HepG2 (cell line): ENCODE measurements at regions of chr6 and their contacts with region 1.

Region 1: DNA sequence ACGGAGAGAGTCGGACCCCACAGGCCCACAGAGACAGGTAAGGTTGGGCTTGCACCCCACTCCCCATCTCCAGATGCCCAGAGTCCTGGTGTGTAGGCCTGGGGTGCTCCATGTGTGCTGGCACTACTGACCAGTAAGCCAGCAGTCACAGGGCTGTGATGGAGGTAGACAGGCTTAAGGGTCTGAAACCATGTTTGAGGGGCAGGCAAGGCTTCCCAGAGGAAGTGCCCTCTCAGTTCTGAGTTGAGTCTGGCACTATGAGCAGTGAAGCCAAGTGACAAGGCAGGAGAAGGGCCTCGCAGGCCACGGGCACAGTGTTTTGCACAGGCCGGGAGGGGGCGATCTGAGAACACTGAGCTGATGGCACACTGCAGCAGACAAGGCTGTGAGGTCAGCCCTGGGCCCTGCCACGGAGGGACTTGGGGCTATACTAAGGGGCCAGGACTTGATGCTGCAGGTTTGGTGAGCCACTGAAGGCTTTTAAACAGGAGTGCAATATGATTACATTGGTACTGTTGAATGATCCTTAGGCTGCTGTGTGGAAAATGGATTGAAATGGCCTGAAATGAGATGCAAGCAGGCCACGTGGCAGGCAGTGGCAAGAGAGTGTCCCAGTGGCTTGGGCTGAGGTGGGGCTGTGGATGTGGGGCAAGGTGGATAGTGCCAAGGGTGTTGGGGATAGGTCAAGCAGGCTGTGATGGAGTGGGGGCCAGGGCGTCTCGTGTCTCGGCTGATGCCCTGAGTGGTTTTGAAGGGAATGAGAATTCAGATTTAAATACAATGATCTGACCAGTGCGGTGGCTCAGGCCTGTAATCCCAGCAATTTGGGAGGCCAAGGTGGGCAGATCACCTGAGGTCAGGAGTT is 20.3 kb downstream of the TTBK1 start:
- DNase-seq: peak; percentile 78
- ATAC-seq: peak; percentile 73
- H3K4me3 ChIP-seq: no peak overlapping the region; a peak in 1 of 6 replicates
- H3K27ac ChIP-seq: no peak overlapping the region
- H3K4me1 ChIP-seq: peaks cover 78% of the 10 kb centered on the region
- H3K27me3 ChIP-seq: peaks cover 0 to 4% of the 10 kb centered on the region in 2 experiments; a peak in 2 of 5 replicates
- CTCF ChIP-seq: peak; percentile 100
- EP300 ChIP-seq: 0 out of 4 replicates have a peak, but pooled peaks of 1 of the 2 experiments have one; percentile 12
- POLR2A ChIP-seq: no peak
- RAD21 ChIP-seq: peak; percentile 100

Region 2: DNA sequence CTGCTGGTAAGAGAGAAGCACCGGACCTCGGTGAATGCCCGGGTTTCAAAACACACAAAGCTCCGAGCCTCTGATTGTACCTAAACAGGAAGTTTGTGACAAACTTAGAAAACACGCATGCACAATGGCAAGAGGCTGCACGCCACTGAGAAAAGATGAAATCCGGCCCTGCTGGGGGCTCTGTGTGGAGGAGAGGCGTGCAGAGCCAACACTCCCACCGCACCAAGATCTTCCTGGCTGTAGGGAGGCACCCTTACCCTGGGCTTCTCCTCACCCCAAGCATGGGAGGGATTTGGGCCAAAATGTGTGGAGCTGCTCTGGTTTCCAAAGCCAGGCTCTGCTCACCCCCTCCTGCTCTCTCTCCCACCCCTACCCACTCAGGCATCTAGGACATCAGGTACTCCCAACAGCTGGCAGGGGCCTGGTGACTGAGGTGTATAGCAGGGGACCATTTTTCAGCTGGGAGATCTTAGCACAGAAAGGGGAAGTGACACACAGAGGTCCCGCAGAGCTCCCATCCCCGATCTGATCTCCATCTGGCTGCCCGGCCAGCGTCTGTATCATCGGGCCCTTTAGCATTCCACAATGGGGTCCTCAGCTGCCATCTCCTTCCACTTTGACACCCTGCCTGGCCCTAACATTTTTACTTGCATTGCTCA is 896.1 kb before region 1 on chr6:
- CTCF ChIA-PET with region 1: no interaction called
- POLR2A ChIA-PET with region 1: no interaction called
- in situ Hi-C with region 1: no loop called
- intact Hi-C with region 1: no loop called
- DNase-seq: no peak
- ATAC-seq: no peak
- H3K4me3 ChIP-seq: no peak overlapping the region
- H3K27ac ChIP-seq: no peak overlapping the region
- H3K4me1 ChIP-seq: no peaks in the 10 kb centered on the region
- H3K27me3 ChIP-seq: peaks cover 2 to 29% of the 10 kb centered on the region in 2 experiments; a peak in 3 of 5 replicates
- CTCF ChIP-seq: no peak
- EP300 ChIP-seq: no peak
- POLR2A ChIP-seq: no peak
- RAD21 ChIP-seq: no peak

Region 3: GRCh38 chr6:42674780-42675179 is 588.8 kb before region 1 on chr6:
- CTCF ChIA-PET with region 1: no interaction called
- POLR2A ChIA-PET with region 1: no interaction called
- in situ Hi-C with region 1: no loop called
- intact Hi-C with region 1: no loop called
- DNase-seq: no peak
- ATAC-seq: no peak
- H3K4me3 ChIP-seq: no peak overlapping the region
- H3K27ac ChIP-seq: no peak overlapping the region
- H3K4me1 ChIP-seq: no peaks in the 10 kb centered on the region
- H3K27me3 ChIP-seq: no peaks in the 10 kb centered on the region
- CTCF ChIP-seq: no peak
- EP300 ChIP-seq: no peak
- POLR2A ChIP-seq: no peak
- RAD21 ChIP-seq: no peak

Region 4: GRCh38 chr6:43211955-43212354 is 51.6 kb before region 1 on chr6:
- CTCF ChIA-PET with region 1: no interaction called
- POLR2A ChIA-PET with region 1: no interaction called
- in situ Hi-C with region 1: no loop called
- intact Hi-C with region 1: no loop called
- DNase-seq: peak; percentile 30
- ATAC-seq: peak; percentile 67
- H3K4me3 ChIP-seq: no peak overlapping the region
- H3K27ac ChIP-seq: no peak overlapping the region
- H3K4me1 ChIP-seq: no peaks in the 10 kb centered on the region
- H3K27me3 ChIP-seq: no peaks in the 10 kb centered on the region
- CTCF ChIP-seq: peak; percentile 51
- EP300 ChIP-seq: no peak
- POLR2A ChIP-seq: no peak
- RAD21 ChIP-seq: no peak

Region 5: DNA sequence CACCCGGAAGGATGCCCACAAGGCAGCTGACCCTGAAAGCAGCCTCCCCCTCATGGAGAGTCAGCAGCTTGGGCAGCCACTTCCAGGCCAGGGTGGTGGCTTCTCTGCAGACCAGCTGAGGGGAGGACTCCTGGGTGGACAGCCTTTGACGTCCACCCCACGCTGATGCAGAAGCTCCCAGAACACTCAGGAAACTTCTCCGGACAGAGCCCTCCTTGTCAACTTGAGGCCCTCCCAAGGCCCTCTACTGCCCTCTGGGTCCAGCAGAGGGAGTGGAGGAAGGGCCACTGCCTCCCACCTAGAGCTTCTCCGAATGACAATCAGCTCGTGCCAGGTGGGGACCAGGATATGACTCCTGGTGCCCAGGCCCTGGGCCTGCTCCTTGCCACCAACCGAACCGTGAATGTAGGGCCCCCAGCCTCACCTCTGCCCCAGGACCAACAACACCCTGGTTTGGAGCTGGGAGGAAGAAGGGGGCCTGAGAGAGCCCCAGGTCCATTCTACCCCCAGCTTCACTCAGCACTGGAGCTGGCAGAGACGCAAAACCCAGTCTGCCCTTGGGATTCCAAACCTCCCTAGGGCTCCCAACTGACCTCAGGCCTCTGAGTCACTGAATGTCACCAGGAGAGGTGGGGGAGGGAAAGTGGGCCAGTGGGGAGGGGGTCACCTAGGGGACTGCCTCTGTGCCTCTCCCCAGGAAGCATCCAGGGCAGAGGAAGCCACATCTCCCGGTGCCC is 23.6 kb after region 1 on chr6:
- CTCF ChIA-PET with region 1: interaction called, 23 read pairs
- POLR2A ChIA-PET with region 1: interaction called, 314 read pairs
- in situ Hi-C with region 1: no loop called
- intact Hi-C with region 1: loop called (anchors 1 kb)
- DNase-seq: peak; percentile 71
- ATAC-seq: peak; percentile 57
- H3K4me3 ChIP-seq: peak overlapping the region in 1 of 3 experiments; percentile 42; a peak in 1 of 6 replicates
- H3K27ac ChIP-seq: peak overlapping the region; percentile 72
- H3K4me1 ChIP-seq: peaks cover 74% of the 10 kb centered on the region
- H3K27me3 ChIP-seq: no peaks in the 10 kb centered on the region
- CTCF ChIP-seq: peak; percentile 74
- EP300 ChIP-seq: 0 out of 4 replicates have a peak, but pooled peaks of 1 of the 2 experiments have one; percentile 2
- POLR2A ChIP-seq: no peak
- RAD21 ChIP-seq: peak; percentile 87

Region 6: GRCh38 chr6:43355862-43356590 is 92.5 kb after region 1 on chr6:
- CTCF ChIA-PET with region 1: interaction called, 25 read pairs
- POLR2A ChIA-PET with region 1: interaction called, 6 read pairs
- in situ Hi-C with region 1: loop called (anchors 5 kb)
- intact Hi-C with region 1: loop called (anchors 1 kb)
- DNase-seq: peak; percentile 64
- ATAC-seq: peak; percentile 99
- H3K4me3 ChIP-seq: no peak overlapping the region
- H3K27ac ChIP-seq: no peak overlapping the region
- H3K4me1 ChIP-seq: peaks cover 2% of the 10 kb centered on the region
- H3K27me3 ChIP-seq: no peaks in the 10 kb centered on the region
- CTCF ChIP-seq: peak; percentile 91
- EP300 ChIP-seq: no peak
- POLR2A ChIP-seq: no peak
- RAD21 ChIP-seq: peak; percentile 86

Region 7: DNA sequence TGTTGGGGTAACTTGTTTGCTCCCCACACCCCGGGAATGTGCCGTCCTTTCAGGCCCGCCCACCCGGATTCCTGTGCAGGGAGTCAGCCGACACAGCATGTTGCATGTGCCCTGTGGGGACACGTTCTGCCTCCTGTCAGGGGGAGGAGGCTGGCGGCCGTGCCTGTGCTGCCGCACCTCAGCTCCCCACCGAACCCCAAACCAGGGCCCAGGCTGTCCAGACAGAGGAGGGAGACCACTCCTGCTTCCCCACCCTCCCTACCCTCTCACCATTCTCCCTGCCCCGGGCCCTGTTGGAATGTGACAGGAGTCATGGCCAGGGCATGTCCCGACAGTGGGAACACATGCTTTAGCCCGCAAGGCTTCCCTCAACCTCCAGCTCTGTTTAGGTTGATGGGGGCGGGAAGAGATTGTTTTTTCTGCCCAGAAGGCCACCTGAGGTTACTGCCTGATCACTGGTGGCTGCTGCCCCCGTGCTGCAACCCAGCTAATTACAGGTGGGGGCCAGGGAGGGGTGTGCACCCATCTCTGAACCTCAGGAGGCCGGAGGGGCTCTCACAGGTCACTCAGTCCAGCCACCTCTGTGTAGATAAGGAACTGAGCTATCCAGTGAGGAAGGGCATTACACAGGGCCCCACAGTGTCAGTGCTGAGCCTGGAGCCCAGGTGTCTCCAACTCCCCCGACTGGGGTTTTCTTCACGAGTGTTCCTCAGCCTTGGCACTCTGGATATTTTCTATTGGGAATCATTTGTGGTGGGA is 233.0 kb after region 1 on chr6:
- CTCF ChIA-PET with region 1: no interaction called
- POLR2A ChIA-PET with region 1: interaction called, 4 read pairs
- in situ Hi-C with region 1: loop called (anchors 5 kb)
- intact Hi-C with region 1: loop called (anchors 5 kb)
- DNase-seq: peak; percentile 80
- ATAC-seq: peak; percentile 66
- H3K4me3 ChIP-seq: peak overlapping the region in 1 of 3 experiments; percentile 27; a peak in 1 of 6 replicates
- H3K27ac ChIP-seq: peak overlapping the region; percentile 46
- H3K4me1 ChIP-seq: peaks cover 22% of the 10 kb centered on the region
- H3K27me3 ChIP-seq: no peaks in the 10 kb centered on the region
- CTCF ChIP-seq: peak; percentile 97
- EP300 ChIP-seq: 0 out of 4 replicates have a peak, but pooled peaks of 1 of the 2 experiments have one; percentile 15
- POLR2A ChIP-seq: no peak
- RAD21 ChIP-seq: peak; percentile 98